ENCODE measurements at regions of chr12 and their contacts with region 1.

Region 1: GRCh38 chr12:107760809-107761501 is at the start of gene PRDM4:
- DNase-seq: peak; percentile 97
- ATAC-seq: peak; percentile 92
- H3K4me3 ChIP-seq: peak within 1 kb of the TSS; percentile 82 to 87 (median 86)
- H3K4me3 Mint-ChIP-seq: peak within 1 kb of the TSS; percentile 94
- H3K27ac ChIP-seq: peak within 1 kb of the TSS; percentile 76
- H3K27ac Mint-ChIP-seq: peak within 1 kb of the TSS; percentile 94
- H3K4me1 ChIP-seq: peaks cover 24 to 29% of the 10 kb centered on the region in 2 donors
- H3K4me1 Mint-ChIP-seq: peaks cover 34% of the 10 kb centered on the region
- H3K27me3 ChIP-seq: peaks cover 0 to 3% (median 0%) of the 10 kb centered on the region in 4 experiments
- H3K27me3 Mint-ChIP-seq: no peaks in the 10 kb centered on the region
- CTCF ChIP-seq: peak; percentile 47
- total RNA-seq, gene PRDM4: 117 TPM in 2 replicates

Region 2: GRCh38 chr12:107685360-107686248 is 75.4 kb before region 1 on chr12 and contains the start of gene PWP1:
- CTCF ChIA-PET with region 1: no interaction called
- POLR2A ChIA-PET with region 1: interaction called, 5 read pairs
- intact Hi-C with region 1: loop called (anchors 1 kb)
- DNase-seq: peak; percentile 98
- ATAC-seq: peak; percentile 91
- H3K4me3 ChIP-seq: peak within 1 kb of the TSS; percentile 69 to 96 (median 86)
- H3K4me3 Mint-ChIP-seq: peak within 1 kb of the TSS; percentile 96
- H3K27ac ChIP-seq: peak within 1 kb of the TSS; percentile 81 to 85
- H3K27ac Mint-ChIP-seq: peak within 1 kb of the TSS; percentile 98
- H3K4me1 ChIP-seq: peaks cover 16 to 22% of the 10 kb centered on the region in 2 donors
- H3K4me1 Mint-ChIP-seq: peaks cover 25% of the 10 kb centered on the region
- H3K27me3 ChIP-seq: no peaks in the 10 kb centered on the region
- H3K27me3 Mint-ChIP-seq: no peaks in the 10 kb centered on the region
- CTCF ChIP-seq: no peak
- total RNA-seq, gene PWP1: 51.2 and 54.8 TPM in 2 replicates

Region 3: DNA sequence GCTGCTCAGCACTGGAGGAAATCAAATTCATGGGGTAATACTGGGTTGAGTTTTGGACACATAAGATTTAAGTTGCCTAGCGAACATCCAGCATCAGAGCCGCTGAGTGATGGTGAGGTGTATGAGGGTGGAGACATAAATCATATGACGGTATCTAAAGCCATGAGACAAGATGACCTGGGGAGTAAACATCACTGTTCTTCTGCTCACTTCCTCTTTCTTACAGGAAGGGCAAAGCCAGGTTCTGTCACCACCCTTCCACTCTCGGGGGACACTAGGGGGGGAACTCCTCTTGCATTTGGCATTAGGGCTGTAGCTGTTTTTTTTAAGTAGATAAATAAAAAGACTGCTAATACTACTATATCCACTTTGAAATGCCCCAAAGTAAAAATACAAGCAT is 24.0 kb before region 1 on chr12:
- CTCF ChIA-PET with region 1: interaction called, 7 read pairs
- POLR2A ChIA-PET with region 1: no interaction called
- intact Hi-C with region 1: loop called (anchors 1 kb)
- DNase-seq: peak; percentile 93
- ATAC-seq: peak; percentile 98
- H3K4me3 ChIP-seq: peak overlapping the region in 1 of 5 experiments; percentile 33
- H3K4me3 Mint-ChIP-seq: peak overlapping the region; percentile 80
- H3K27ac ChIP-seq: peak overlapping the region; percentile 96 to 99
- H3K27ac Mint-ChIP-seq: peak overlapping the region; percentile 95
- H3K4me1 ChIP-seq: peaks cover 34 to 36% of the 10 kb centered on the region in 2 donors
- H3K4me1 Mint-ChIP-seq: peaks cover 75% of the 10 kb centered on the region
- H3K27me3 ChIP-seq: no peaks in the 10 kb centered on the region
- H3K27me3 Mint-ChIP-seq: no peaks in the 10 kb centered on the region
- CTCF ChIP-seq: peak; percentile 58

Region 4: DNA sequence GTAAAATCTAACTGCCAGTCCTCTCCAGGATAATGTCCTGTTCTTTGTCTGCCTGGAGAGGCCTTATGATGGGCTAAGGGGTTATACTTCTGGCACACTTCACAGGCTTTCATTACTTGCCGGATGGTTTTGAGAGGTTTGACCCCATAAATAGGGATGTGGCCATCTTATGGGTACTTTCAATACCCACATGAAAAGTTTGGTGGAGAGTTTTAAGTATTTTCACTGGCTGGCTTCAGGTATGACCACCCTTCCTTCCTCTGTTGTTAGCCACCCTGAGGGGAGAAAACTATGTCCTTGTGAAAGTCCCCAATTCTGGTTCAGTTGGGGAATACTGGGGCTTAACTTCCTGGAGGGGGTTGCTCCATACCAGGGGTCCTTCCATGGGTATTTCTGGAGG is 68.3 kb after region 1 on chr12:
- CTCF ChIA-PET with region 1: no interaction called
- POLR2A ChIA-PET with region 1: no interaction called
- intact Hi-C with region 1: no loop called
- DNase-seq: no peak
- ATAC-seq: no peak
- H3K4me3 ChIP-seq: no peak overlapping the region
- H3K4me3 Mint-ChIP-seq: no peak overlapping the region
- H3K27ac ChIP-seq: no peak overlapping the region
- H3K27ac Mint-ChIP-seq: no peak overlapping the region
- H3K4me1 ChIP-seq: no peaks in the 10 kb centered on the region
- H3K4me1 Mint-ChIP-seq: no peaks in the 10 kb centered on the region
- H3K27me3 ChIP-seq: peaks cover 0 to 15% (median 2%) of the 10 kb centered on the region in 4 experiments
- H3K27me3 Mint-ChIP-seq: peaks cover 37% of the 10 kb centered on the region
- CTCF ChIP-seq: no peak

Region 5: GRCh38 chr12:107884769-107885694 is 124.1 kb after region 1 on chr12:
- CTCF ChIA-PET with region 1: no interaction called
- POLR2A ChIA-PET with region 1: no interaction called
- intact Hi-C with region 1: loop called (anchors 1 kb)
- DNase-seq: peak; percentile 77
- ATAC-seq: peak; percentile 78
- H3K4me3 ChIP-seq: no peak overlapping the region
- H3K4me3 Mint-ChIP-seq: no peak overlapping the region
- H3K27ac ChIP-seq: no peak overlapping the region
- H3K27ac Mint-ChIP-seq: no peak overlapping the region
- H3K4me1 ChIP-seq: no peaks in the 10 kb centered on the region
- H3K4me1 Mint-ChIP-seq: peaks cover 1% of the 10 kb centered on the region
- H3K27me3 ChIP-seq: peaks cover 0 to 7% (median 0%) of the 10 kb centered on the region in 4 experiments
- H3K27me3 Mint-ChIP-seq: peaks cover 14% of the 10 kb centered on the region
- CTCF ChIP-seq: peak; percentile 86

Region 6: GRCh38 chr12:107955966-107956643 is 195.2 kb after region 1 on chr12:
- CTCF ChIA-PET with region 1: no interaction called
- POLR2A ChIA-PET with region 1: no interaction called
- intact Hi-C with region 1: no loop called
- DNase-seq: no peak
- ATAC-seq: no peak
- H3K4me3 ChIP-seq: no peak overlapping the region
- H3K4me3 Mint-ChIP-seq: no peak overlapping the region
- H3K27ac ChIP-seq: no peak overlapping the region
- H3K27ac Mint-ChIP-seq: no peak overlapping the region
- H3K4me1 ChIP-seq: no peaks in the 10 kb centered on the region
- H3K4me1 Mint-ChIP-seq: no peaks in the 10 kb centered on the region
- H3K27me3 ChIP-seq: no peaks in the 10 kb centered on the region
- H3K27me3 Mint-ChIP-seq: peaks cover 18% of the 10 kb centered on the region
- CTCF ChIP-seq: no peak